ENCODE measurements at regions of chr15 and their contacts with region 1.

Region 1: GRCh38 chr15:38354315-38354929 is 99.5 kb upstream of the FAM98B start:
- DNase-seq: peak in 1 of 2 donors; percentile 70
- ATAC-seq: peak in 7 of 8 donors; percentile 47 to 83 (median 70)
- H3K4me3 ChIP-seq: no peak overlapping the region
- H3K27ac ChIP-seq: no peak overlapping the region
- H3K4me1 ChIP-seq: peaks cover 0 to 5% (median 0%) of the 10 kb centered on the region in 9 donors
- H3K27me3 ChIP-seq: no peaks in the 10 kb centered on the region
- CTCF ChIP-seq: peak; percentile 73 to 90 (median 82)

Region 2: GRCh38 chr15:37995461-37996347 is 358.7 kb before region 1 on chr15:
- intact Hi-C with region 1: loop called (anchors 2 to 5 kb)
- DNase-seq: peak in 1 of 2 donors; percentile 39
- ATAC-seq: peak; percentile 74 to 88 (median 81)
- H3K4me3 ChIP-seq: no peak overlapping the region
- H3K27ac ChIP-seq: no peak overlapping the region
- H3K4me1 ChIP-seq: peaks cover 0 to 2% (median 0%) of the 10 kb centered on the region in 9 donors
- H3K27me3 ChIP-seq: peaks cover 0 to 4% (median 0%) of the 10 kb centered on the region in 7 donors
- CTCF ChIP-seq: peak; percentile 51 to 80 (median 70)

Region 3: GRCh38 chr15:38072348-38073177 is 281.9 kb before region 1 on chr15:
- intact Hi-C with region 1: loop called in 5 of 10 experiments (anchors 5 to 10 kb)
- DNase-seq: peak; percentile 65 to 79
- ATAC-seq: peak; percentile 86 to 97 (median 89)
- H3K4me3 ChIP-seq: peak overlapping the region; percentile 37 to 73 (median 63)
- H3K27ac ChIP-seq: peak overlapping the region; percentile 83 to 96 (median 90)
- H3K4me1 ChIP-seq: peaks cover 8 to 54% (median 39%) of the 10 kb centered on the region in 9 donors
- H3K27me3 ChIP-seq: peaks cover 0 to 3% (median 0%) of the 10 kb centered on the region in 7 donors
- CTCF ChIP-seq: peak in 4 of 9 donors; percentile 22 to 49 (median 33)

Region 4: DNA sequence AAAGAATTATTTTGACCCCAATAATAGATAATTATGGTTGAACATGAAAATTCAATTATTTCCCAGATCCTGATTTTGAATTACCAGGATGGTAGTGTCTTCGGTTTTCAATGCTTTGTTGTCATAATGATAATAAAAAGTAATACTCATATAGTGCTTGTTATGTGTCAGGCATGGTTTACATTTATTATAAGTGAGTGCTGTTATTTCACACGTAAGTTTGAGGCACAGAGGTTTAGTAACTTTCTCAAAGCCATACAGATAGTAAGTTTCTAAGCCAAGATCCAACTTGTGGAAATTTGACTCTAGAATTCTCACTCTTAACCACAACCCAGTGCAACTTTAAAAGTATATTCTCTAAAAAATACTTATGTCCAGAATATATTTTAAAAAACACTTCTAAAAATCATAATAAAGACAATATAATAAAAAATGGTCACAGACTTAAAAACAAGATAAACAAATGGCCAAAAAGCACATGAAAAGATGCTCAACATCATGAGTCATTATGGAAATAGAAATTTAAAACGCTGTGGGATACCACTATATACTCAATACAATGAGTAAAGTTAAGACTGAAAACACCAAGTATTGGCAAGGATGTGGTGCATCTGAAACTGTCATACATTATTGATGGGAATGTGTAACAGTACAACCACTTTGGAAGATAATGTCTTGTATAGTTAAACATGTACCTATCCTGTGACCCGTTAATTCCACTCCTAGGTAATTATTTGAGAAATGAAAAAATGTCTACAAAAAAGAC is 56.6 kb before region 1 on chr15:
- intact Hi-C with region 1: loop called in 1 of 10 experiments (anchors 10 kb)
- DNase-seq: no peak
- ATAC-seq: no peak
- H3K4me3 ChIP-seq: no peak overlapping the region
- H3K27ac ChIP-seq: no peak overlapping the region
- H3K4me1 ChIP-seq: peaks cover 3 to 73% (median 36%) of the 10 kb centered on the region in 9 donors
- H3K27me3 ChIP-seq: no peaks in the 10 kb centered on the region
- CTCF ChIP-seq: no peak

Region 5: GRCh38 chr15:38414357-38414756 is 59.9 kb after region 1 on chr15:
- intact Hi-C with region 1: loop called in 2 of 10 experiments (anchors 5 to 10 kb)
- DNase-seq: peak; percentile 35 to 66
- ATAC-seq: peak in 7 of 8 donors; percentile 88 to 94 (median 93)
- H3K4me3 ChIP-seq: no peak overlapping the region
- H3K27ac ChIP-seq: no peak overlapping the region
- H3K4me1 ChIP-seq: peaks cover 0 to 10% (median 0%) of the 10 kb centered on the region in 9 donors
- H3K27me3 ChIP-seq: peaks cover 0 to 15% (median 0%) of the 10 kb centered on the region in 7 donors
- CTCF ChIP-seq: peak; percentile 45 to 75 (median 66)

Measured in heart right ventricle (tissue), 16 donors.